ENCODE measurements at regions of chr6 and their contacts with region 1.

Region 1: DNA sequence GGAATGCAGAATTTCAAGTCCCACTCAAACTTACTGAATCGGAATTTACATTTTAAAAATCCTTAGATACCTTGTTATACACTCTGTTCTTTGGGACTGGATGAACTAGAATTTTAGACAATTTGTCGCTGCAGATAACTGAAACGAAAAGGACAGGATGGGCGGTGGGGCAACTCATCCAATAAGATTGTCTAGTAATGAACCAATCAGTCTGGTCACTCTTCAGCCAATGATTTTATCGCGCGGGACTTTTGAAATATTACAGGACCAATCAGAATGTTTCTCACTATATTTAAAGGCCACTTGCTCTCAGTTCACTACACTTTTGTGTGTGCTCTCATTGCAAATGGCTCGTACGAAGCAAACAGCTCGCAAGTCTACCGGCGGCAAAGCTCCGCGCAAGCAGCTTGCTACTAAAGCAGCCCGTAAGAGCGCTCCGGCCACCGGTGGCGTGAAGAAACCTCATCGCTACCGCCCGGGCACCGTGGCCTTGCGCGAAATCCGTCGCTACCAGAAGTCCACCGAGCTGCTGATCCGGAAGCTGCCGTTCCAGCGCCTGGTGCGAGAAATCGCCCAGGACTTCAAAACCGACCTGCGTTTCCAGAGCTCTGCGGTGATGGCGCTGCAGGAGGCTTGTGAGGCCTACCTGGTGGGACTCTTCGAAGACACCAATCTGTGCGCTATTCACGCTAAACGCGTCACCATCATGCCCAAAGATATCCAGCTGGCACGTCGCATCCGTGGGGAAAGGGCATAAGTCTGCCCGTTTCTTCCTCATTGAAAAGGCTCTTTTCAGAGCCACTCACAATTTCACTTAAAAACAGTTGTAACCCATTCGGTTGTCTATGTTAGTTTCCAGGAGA is 41.9 kb upstream of the HFE start:
- DNase-seq: peak; percentile 91
- ATAC-seq: peak; percentile 55
- H3K4me3 Mint-ChIP-seq: peak overlapping the region; percentile 88
- H3K27ac Mint-ChIP-seq: peak overlapping the region; percentile 99
- H3K4me1 Mint-ChIP-seq: peaks cover 43% of the 10 kb centered on the region
- H3K27me3 Mint-ChIP-seq: no peaks in the 10 kb centered on the region

Region 2: DNA sequence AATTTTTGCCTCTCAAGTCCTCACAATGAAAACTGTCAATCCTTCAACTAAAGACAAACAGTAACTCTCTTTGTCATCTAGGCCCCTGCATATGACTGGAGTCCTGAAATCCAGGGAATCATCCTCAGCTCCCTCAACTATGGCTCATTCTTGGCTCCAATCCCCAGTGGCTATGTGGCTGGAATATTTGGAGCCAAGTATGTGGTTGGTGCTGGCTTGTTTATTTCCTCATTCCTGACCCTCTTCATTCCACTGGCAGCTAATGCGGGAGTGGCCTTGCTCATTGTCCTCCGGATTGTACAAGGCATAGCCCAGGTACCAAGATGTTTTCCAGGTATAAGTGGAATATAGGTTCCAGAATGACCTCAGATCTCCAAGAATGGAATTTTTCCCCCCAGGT is 275.3 kb before region 1 on chr6:
- CTCF ChIA-PET with region 1: no interaction called
- POLR2A ChIA-PET with region 1: no interaction called
- DNase-seq: no peak
- ATAC-seq: no peak
- H3K4me3 Mint-ChIP-seq: no peak overlapping the region
- H3K27ac Mint-ChIP-seq: no peak overlapping the region
- H3K4me1 Mint-ChIP-seq: no peaks in the 10 kb centered on the region
- H3K27me3 Mint-ChIP-seq: peaks cover 19% of the 10 kb centered on the region

Region 3: GRCh38 chr6:25862189-25862588 is 183.1 kb before region 1 on chr6:
- CTCF ChIA-PET with region 1: no interaction called
- POLR2A ChIA-PET with region 1: no interaction called
- DNase-seq: no peak
- ATAC-seq: no peak
- H3K4me3 Mint-ChIP-seq: no peak overlapping the region
- H3K27ac Mint-ChIP-seq: no peak overlapping the region
- H3K4me1 Mint-ChIP-seq: peaks cover 29% of the 10 kb centered on the region
- H3K27me3 Mint-ChIP-seq: peaks cover 8% of the 10 kb centered on the region

Region 4: GRCh38 chr6:26020329-26021000 is 24.8 kb before region 1 on chr6:
- CTCF ChIA-PET with region 1: interaction called, 26 read pairs
- POLR2A ChIA-PET with region 1: interaction called, 1,951 read pairs
- DNase-seq: peak; percentile 88
- ATAC-seq: peak; percentile 51
- H3K4me3 Mint-ChIP-seq: peak overlapping the region; percentile 96
- H3K27ac Mint-ChIP-seq: peak overlapping the region; percentile 100
- H3K4me1 Mint-ChIP-seq: peaks cover 65% of the 10 kb centered on the region
- H3K27me3 Mint-ChIP-seq: no peaks in the 10 kb centered on the region

Region 5: GRCh38 chr6:26097268-26097875 is 52.1 kb after region 1 on chr6:
- CTCF ChIA-PET with region 1: interaction called, 11 read pairs
- POLR2A ChIA-PET with region 1: interaction called, 76 read pairs
- DNase-seq: peak; percentile 78
- ATAC-seq: peak; percentile 85
- H3K4me3 Mint-ChIP-seq: no peak overlapping the region
- H3K27ac Mint-ChIP-seq: no peak overlapping the region
- H3K4me1 Mint-ChIP-seq: peaks cover 16% of the 10 kb centered on the region
- H3K27me3 Mint-ChIP-seq: peaks cover 9% of the 10 kb centered on the region

Region 6: DNA sequence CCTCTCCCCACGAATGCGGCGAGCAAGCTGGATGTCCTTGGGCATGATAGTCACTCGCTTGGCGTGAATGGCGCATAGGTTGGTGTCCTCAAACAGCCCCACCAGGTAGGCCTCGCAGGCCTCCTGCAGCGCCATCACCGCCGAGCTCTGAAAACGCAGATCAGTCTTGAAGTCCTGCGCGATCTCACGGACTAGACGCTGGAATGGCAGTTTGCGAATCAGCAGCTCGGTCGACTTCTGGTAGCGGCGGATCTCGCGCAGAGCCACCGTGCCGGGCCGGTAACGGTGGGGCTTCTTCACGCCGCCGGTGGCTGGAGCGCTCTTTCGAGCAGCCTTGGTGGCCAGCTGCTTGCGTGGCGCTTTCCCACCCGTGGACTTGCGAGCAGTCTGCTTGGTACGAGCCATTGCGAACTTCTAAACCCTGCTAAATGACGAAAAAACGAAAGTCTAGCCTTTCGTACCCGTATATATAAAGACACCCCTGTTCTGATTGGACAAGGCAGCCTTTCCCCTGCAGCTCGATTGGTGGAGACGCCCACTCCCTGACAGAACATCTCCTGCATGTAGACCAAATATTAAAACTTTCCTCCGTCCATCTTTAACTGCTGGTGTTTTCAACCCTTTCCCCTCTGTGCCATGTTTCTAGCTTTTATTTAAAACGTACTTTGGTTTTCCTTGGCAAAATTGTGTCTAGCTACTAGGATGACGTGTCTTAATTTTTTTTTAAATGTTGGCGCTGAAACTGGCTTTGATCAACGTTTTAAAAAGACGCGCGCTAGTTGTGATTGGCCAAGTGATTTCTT is 151.8 kb after region 1 on chr6:
- CTCF ChIA-PET with region 1: no interaction called
- POLR2A ChIA-PET with region 1: interaction called, 213 read pairs
- DNase-seq: peak; percentile 92
- ATAC-seq: peak; percentile 43
- H3K4me3 Mint-ChIP-seq: peak overlapping the region; percentile 99
- H3K27ac Mint-ChIP-seq: peak overlapping the region; percentile 93
- H3K4me1 Mint-ChIP-seq: peaks cover 50% of the 10 kb centered on the region
- H3K27me3 Mint-ChIP-seq: no peaks in the 10 kb centered on the region

Region 7: DNA sequence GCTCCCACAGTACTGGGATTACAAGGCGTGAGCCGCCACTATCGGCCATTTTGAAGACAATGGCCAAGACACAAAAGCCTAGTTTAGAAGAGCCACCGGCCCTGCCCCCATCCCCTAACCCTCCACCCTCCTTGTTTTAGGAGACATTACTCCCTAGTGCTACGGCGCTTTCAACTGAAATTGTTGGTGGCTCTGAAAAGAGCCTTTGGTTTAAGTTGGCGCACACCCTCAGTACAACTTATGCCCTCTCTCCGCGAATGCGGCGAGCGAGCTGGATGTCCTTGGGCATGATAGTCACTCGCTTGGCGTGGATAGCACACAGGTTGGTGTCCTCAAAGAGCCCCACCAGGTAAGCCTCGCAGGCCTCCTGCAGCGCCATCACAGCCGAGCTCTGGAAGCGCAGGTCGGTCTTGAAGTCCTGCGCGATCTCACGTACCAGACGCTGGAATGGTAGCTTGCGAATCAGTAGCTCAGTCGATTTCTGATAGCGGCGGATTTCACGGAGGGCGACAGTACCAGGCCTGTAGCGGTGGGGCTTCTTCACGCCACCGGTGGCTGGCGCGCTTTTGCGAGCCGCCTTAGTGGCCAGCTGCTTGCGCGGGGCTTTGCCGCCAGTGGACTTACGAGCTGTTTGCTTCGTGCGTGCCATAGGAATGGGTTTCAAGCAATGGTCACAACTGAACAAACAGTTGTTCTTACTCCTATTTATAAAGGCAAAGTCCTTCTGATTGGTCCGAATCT is 204.8 kb after region 1 on chr6:
- CTCF ChIA-PET with region 1: no interaction called
- POLR2A ChIA-PET with region 1: interaction called, 47 read pairs
- DNase-seq: peak; percentile 85
- ATAC-seq: peak; percentile 55
- H3K4me3 Mint-ChIP-seq: peak overlapping the region; percentile 84
- H3K27ac Mint-ChIP-seq: peak overlapping the region; percentile 100
- H3K4me1 Mint-ChIP-seq: peaks cover 30% of the 10 kb centered on the region
- H3K27me3 Mint-ChIP-seq: no peaks in the 10 kb centered on the region

Region 8: GRCh38 chr6:27825025-27825793 is 1779.9 kb after region 1 on chr6:
- CTCF ChIA-PET with region 1: no interaction called
- POLR2A ChIA-PET with region 1: interaction called, 17 read pairs
- DNase-seq: no peak
- ATAC-seq: peak; percentile 3
- H3K4me3 Mint-ChIP-seq: peak overlapping the region; percentile 93
- H3K27ac Mint-ChIP-seq: peak overlapping the region; percentile 99
- H3K4me1 Mint-ChIP-seq: peaks cover 45% of the 10 kb centered on the region
- H3K27me3 Mint-ChIP-seq: no peaks in the 10 kb centered on the region

Measured in activated CD8-positive, alpha-beta T cell treated with anti-CD3 and anti-CD28 coated beads, Interleukin-2, amount 10 ng/mL, durations not matched to agents 7 days and 5 days (primary cell).